ENCODE measurements at regions of chr9 and their contacts with region 1.

Region 1: DNA sequence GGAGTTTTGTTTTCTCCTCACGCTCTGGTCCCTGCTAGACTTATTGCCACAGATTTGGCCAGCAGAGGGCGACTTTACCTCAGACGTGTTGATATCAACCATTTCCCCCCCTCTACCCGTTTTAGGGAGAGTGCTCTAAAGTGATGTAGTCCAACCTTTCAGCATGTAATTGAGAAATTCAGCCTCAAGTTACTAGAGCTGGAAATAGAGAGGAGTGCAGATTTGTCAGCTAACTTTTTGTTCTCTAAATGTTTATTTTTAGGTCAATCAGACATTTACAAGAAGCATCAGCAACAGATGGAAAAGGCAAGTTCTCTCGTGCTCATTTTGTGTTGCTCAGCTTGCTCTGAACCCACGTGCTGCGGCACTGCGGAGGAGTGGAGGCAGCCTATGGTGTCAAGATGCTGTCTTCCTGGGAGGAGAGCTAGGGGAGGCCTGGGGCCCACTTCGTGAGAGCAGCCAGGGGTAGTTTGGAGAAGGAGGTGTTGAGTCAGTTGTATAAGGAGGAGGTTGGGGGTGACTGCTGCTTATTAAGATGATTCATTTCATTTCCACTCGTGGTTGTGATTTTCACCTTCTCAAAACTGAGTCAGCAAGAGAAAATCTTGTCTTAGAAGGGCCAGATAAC is 53.6 kb downstream of the GPR107 start:
- DNase-seq: peak; percentile 59 to 72
- ATAC-seq: peak; percentile 87 to 94
- H3K4me3 ChIP-seq: no peak overlapping the region
- H3K27ac ChIP-seq: no peak overlapping the region
- H3K4me1 ChIP-seq: no peaks in the 10 kb centered on the region
- CTCF ChIP-seq: peak; percentile 88
- EP300 ChIP-seq: no peak
- POLR2A ChIP-seq: no peak
- RAD21 ChIP-seq: peak; percentile 88 to 92

Region 2: DNA sequence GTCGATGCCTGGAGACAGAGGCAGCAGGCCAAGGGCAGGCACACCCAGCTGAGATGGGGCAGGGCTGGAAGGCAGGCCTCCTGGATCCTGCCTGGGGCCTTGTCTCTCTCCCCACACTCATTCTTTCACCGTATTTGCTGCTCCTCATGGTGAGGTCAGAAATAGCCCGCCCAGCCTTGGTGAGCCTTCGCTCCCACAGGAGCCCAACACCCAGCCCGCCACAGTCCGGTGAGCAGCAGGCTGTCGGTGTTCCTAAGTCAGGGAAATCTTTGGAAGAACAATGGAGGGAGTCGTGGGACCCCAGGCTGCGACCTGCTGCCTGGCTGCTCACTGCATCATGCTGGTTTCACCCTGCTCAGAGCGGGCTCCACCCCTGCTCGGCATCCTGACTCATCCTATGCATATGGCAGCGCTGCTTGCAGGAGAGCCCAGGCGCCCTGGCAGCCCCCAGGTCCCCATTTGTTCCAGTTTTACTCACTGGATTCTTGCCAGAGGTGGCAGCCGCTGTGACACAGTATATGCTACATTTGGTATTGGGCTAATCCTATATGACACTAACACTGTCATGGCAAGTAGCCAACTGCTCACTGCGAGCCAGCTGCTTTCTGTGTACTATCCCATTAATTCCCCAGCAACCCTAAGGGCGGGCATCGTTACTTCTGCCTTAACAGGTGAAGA is 11.6 kb after region 1 on chr9:
- CTCF ChIA-PET with region 1: interaction called, 39 read pairs
- POLR2A ChIA-PET with region 1: no interaction called
- DNase-seq: no peak
- ATAC-seq: peak; percentile 20 to 37; a peak in 3 of 6 replicates
- H3K4me3 ChIP-seq: no peak overlapping the region
- H3K27ac ChIP-seq: no peak overlapping the region; a peak in 1 of 6 replicates
- H3K4me1 ChIP-seq: peaks cover 13% of the 10 kb centered on the region
- CTCF ChIP-seq: no peak
- EP300 ChIP-seq: no peak
- POLR2A ChIP-seq: no peak
- RAD21 ChIP-seq: no peak

Region 3: DNA sequence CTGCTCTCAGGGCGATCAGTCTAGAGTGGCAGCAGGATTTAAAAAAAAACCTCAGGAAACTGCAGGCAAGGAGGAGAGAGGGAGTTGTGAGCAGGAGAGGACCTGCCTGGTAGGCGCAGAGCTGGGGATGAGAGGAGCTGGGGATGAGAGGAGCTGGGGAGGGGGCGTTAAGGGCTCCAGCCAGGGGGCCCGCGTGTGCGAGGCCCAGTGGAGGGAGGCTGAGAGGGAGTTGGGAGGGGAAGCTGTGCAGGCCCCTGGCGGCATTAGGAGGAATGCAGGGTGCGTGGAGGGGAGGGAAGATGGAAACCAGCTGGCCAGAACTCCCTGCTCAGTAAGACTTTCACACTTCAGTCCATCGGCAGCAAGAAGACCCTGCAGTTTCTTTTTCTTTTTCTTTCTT is 113.0 kb after region 1 on chr9:
- CTCF ChIA-PET with region 1: interaction called, 13 read pairs
- POLR2A ChIA-PET with region 1: no interaction called
- DNase-seq: no peak
- ATAC-seq: peak in 1 of 2 experiments; percentile 20; a peak in 1 of 6 replicates
- H3K4me3 ChIP-seq: no peak overlapping the region
- H3K27ac ChIP-seq: no peak overlapping the region
- H3K4me1 ChIP-seq: no peaks in the 10 kb centered on the region
- CTCF ChIP-seq: no peak
- EP300 ChIP-seq: no peak
- POLR2A ChIP-seq: no peak
- RAD21 ChIP-seq: no peak

Region 4: GRCh38 chr9:130243015-130243734 is 135.8 kb after region 1 on chr9:
- CTCF ChIA-PET with region 1: interaction called, 191 read pairs
- POLR2A ChIA-PET with region 1: no interaction called
- DNase-seq: peak; percentile 79 to 83
- ATAC-seq: peak; percentile 55 to 82
- H3K4me3 ChIP-seq: peak overlapping the region; percentile 40
- H3K27ac ChIP-seq: peak overlapping the region; percentile 60 to 80
- H3K4me1 ChIP-seq: peaks cover 17% of the 10 kb centered on the region
- CTCF ChIP-seq: peak; percentile 77
- EP300 ChIP-seq: no peak
- POLR2A ChIP-seq: no peak
- RAD21 ChIP-seq: peak; percentile 56 to 65

Region 5: GRCh38 chr9:130290291-130291181 is 183.2 kb after region 1 on chr9:
- CTCF ChIA-PET with region 1: no interaction called
- POLR2A ChIA-PET with region 1: no interaction called
- DNase-seq: no peak
- ATAC-seq: no peak
- H3K4me3 ChIP-seq: no peak overlapping the region
- H3K27ac ChIP-seq: no peak overlapping the region
- H3K4me1 ChIP-seq: no peaks in the 10 kb centered on the region
- CTCF ChIP-seq: no peak
- EP300 ChIP-seq: no peak
- POLR2A ChIP-seq: no peak
- RAD21 ChIP-seq: no peak